ENCODE measurements at regions of chr6 and their contacts with region 1.

Region 1: GRCh38 chr6:139219271-139219729 is 72.5 kb downstream of the TXLNB start:
- DNase-seq: peak; percentile 85 to 94 (median 91)
- ATAC-seq: peak; percentile 99 to 100
- H3K4me3 ChIP-seq: no peak overlapping the region
- H3K27ac ChIP-seq: peak overlapping the region; percentile 37
- H3K4me1 ChIP-seq: no peaks in the 10 kb centered on the region
- H3K27me3 ChIP-seq: no peaks in the 10 kb centered on the region

Region 2: DNA sequence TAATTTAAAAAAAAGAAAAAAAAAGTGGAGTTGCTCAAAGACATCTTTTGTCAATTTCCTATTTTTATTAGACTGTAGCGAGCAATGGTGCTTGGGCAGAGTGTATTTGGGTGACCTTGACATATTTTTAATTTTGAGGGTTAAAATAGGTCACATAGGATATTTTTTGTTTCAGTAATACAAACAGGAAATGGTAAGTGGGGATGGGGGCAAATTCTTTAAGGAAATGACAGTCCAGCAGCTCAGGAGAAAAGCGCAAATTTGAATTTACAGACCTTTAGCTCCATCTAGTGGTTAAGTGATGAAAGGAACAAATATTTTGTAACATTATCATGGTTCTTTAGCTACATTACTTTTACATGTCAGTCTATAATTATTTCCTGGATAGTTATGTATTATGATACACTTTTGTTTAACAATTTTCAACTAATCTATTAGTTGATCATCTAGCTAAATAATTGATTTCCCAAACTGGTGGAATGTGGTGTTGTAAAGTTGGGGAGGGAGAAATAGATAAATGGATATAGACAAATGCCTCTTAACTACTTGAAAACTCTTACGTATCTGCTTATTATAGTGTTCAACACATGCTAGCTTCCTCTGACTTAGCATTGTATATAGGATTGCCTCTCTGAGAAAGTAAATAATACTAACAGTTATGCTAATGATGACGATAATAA is 145.1 kb after region 1 on chr6:
- intact Hi-C with region 1: loop called in 3 of 4 experiments (anchors 2 to 5 kb)
- DNase-seq: no peak
- ATAC-seq: peak in 1 of 2 donors; percentile 36
- H3K4me3 ChIP-seq: no peak overlapping the region
- H3K27ac ChIP-seq: no peak overlapping the region
- H3K4me1 ChIP-seq: no peaks in the 10 kb centered on the region
- H3K27me3 ChIP-seq: no peaks in the 10 kb centered on the region

Region 3: DNA sequence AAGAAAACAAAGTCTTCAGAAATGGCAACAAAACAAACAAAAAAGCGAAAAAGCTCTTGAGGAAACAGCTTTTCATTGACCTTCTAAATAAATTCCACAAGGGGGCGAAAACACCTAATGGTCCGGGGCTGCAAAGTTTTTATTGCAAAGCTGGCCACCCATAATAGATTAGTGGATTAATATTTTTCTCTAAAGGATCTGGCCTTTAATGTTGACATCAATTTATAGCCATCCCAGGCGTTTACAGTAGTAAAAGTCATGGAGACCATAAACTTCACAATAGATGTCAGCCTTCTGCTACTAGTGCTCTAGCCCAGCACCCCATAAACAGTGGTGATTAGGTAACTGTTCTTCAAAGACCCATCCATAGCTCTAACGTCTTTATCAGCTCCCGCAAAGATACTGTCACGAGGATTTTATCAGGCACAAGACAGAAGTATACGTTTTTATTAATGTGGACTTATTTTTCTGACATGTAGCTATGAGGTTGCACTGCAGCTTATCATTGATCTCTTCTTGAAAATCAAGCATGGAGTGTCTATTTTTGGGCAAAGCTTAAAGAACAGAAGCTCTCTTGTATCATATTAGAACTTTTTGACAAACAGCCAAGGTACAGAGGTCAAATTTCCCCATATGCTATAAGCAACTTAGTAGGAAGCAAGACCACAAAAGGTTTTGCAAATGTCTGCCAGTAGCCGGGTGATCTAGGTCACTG is 150.4 kb after region 1 on chr6:
- intact Hi-C with region 1: loop called in 3 of 4 experiments (anchors 2 to 5 kb)
- DNase-seq: no peak
- ATAC-seq: no peak
- H3K4me3 ChIP-seq: no peak overlapping the region
- H3K27ac ChIP-seq: peak overlapping the region; percentile 65
- H3K4me1 ChIP-seq: no peaks in the 10 kb centered on the region
- H3K27me3 ChIP-seq: no peaks in the 10 kb centered on the region

Region 4: GRCh38 chr6:139955366-139956155 is 736.3 kb after region 1 on chr6:
- intact Hi-C with region 1: no loop called
- DNase-seq: no peak
- ATAC-seq: no peak
- H3K4me3 ChIP-seq: no peak overlapping the region
- H3K27ac ChIP-seq: no peak overlapping the region
- H3K4me1 ChIP-seq: no peaks in the 10 kb centered on the region
- H3K27me3 ChIP-seq: no peaks in the 10 kb centered on the region